MCF 10A (cell line): ENCODE measurements at regions of chr10 and their contacts with region 1.

Region 1: DNA sequence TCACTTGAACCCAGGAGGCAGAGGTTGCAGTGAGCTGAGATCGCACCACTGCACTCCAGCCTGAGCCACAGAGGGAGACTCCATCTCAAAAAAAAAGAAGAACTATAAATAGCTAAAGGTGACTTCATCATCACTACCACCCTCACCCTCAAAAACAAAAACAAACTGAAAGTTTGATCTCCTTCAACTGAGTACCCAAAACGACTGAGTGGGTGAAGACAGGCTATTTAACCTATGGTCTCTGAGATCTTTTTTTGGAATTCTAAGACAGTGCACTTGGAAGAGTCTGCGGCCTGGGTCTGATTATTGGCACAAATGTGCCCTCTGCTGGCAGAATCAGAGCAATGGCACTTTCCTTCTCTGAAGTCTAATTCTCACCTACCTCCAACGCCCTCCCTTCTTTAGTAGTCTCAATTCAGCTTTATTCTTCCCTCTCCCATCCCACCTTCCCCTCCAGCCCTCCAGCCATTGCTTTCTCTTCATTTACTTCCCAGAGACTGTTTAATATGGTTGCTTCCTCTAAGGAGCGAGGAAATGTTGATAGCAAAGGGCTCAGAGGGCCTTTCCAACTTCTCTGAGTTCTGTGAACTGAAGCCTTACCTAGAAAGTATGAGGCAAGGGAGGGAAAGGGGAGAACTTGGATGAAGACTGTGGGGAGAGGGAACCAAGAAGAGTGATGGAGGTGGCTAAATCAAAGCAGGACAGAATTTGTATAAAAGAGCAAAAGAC is 2.9 kb upstream of the MYOZ1 start:
- DNase-seq: peak; percentile 75
- H3K4me3 Mint-ChIP-seq: no peak overlapping the region
- H3K27ac Mint-ChIP-seq: no peak overlapping the region
- H3K4me1 Mint-ChIP-seq: peaks cover 7% of the 10 kb centered on the region
- H3K27me3 Mint-ChIP-seq: no peaks in the 10 kb centered on the region
- CTCF ChIP-seq: peak; percentile 85

Region 2: DNA sequence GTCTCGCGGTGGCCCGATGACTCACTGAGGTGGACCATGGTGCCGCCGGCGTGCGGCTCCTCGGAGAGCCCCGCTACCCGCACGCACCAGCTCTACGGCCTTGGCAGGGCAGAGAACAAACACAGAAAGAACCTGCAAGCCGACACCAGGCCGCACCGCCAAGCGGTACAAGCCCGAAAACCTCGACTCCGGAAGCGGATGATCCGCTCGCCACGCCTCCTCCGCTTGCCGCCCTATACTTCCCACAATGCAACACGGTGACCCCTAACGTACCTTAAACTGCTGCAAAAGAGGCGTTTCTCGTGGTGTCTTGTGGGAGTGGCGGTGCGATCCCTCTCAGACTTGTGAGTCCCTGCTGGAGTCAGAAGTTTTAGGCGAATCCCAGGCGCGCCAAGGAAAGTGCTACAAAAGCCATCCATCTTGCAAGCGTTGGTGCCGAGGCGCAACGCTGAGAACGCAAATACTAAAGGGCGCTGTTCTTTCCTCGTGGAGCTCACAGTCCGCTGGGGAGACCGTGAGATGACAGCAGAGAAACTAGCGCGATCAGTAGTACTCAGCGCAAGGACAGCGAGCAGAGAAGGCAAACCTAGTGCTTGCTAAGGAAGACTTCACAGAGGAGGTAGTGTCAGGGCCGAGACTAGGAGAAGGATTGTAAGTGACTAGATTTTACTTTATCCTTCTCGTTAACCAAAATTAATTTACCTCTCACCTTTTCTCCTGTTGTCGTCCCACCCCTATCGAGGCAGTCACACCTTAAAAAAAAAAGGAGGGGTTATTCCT is 391.5 kb before region 1 on chr10 and contains the start of gene MRPS16:
- CTCF ChIA-PET with region 1: no interaction called
- POLR2A ChIA-PET with region 1: no interaction called
- intact Hi-C with region 1: no loop called
- DNase-seq: peak; percentile 98
- H3K4me3 Mint-ChIP-seq: peak within 1 kb of the TSS; percentile 90
- H3K27ac Mint-ChIP-seq: peak within 1 kb of the TSS; percentile 94
- H3K4me1 Mint-ChIP-seq: peaks cover 9% of the 10 kb centered on the region
- H3K27me3 Mint-ChIP-seq: no peaks in the 10 kb centered on the region
- CTCF ChIP-seq: no peak
- total RNA-seq, gene MRPS16: 203 and 247 TPM in 2 replicates

Region 3: GRCh38 chr10:73522263-73522662 is 121.9 kb before region 1 on chr10:
- CTCF ChIA-PET with region 1: interaction called, 31 read pairs
- POLR2A ChIA-PET with region 1: no interaction called
- intact Hi-C with region 1: no loop called
- DNase-seq: no peak
- H3K4me3 Mint-ChIP-seq: no peak overlapping the region
- H3K27ac Mint-ChIP-seq: no peak overlapping the region
- H3K4me1 Mint-ChIP-seq: no peaks in the 10 kb centered on the region
- H3K27me3 Mint-ChIP-seq: no peaks in the 10 kb centered on the region
- CTCF ChIP-seq: no peak

Region 4: DNA sequence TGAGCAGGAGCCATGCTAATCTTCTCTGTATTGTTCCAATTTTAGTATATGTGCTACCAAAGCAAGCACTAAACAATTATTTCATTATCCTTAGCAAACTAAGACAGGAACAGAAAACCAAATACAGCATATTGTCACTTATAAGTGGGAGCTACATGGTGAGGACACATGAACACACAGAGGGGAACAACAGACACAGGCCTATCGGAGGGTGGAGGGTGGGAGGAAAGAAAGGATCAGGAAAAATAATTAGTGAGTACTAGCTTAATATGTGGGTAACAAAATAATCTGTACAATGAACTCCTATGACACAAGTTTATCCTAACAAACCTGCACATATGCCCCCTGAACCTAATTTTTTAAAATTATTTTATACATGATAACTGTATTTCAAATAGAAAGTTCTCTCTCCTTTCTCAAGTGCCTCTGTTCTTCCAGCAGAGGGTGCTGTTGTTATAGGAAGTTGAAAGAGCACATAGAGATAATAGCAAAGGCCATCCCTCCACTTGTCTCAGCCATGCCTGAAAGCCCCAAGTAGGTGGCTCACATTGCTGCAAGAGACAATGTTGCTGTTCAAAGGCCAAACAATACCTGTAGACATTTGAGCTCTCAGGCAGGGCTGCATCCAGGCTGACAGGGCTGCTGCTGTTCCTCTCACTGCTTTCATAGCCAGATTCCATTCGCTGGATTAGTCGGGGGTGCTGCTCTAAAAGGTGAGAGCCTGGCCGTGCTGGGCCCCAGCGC is 114.9 kb before region 1 on chr10:
- CTCF ChIA-PET with region 1: interaction called, 222 read pairs
- POLR2A ChIA-PET with region 1: interaction called, 10 read pairs
- intact Hi-C with region 1: loop called (anchors 1 kb)
- DNase-seq: peak; percentile 80
- H3K4me3 Mint-ChIP-seq: no peak overlapping the region
- H3K27ac Mint-ChIP-seq: no peak overlapping the region
- H3K4me1 Mint-ChIP-seq: no peaks in the 10 kb centered on the region
- H3K27me3 Mint-ChIP-seq: no peaks in the 10 kb centered on the region
- CTCF ChIP-seq: peak; percentile 87

Region 5: GRCh38 chr10:73537288-73537687 is 106.9 kb before region 1 on chr10:
- CTCF ChIA-PET with region 1: interaction called, 222 read pairs
- POLR2A ChIA-PET with region 1: interaction called, 3 read pairs
- intact Hi-C with region 1: no loop called
- DNase-seq: no peak
- H3K4me3 Mint-ChIP-seq: no peak overlapping the region
- H3K27ac Mint-ChIP-seq: no peak overlapping the region
- H3K4me1 Mint-ChIP-seq: no peaks in the 10 kb centered on the region
- H3K27me3 Mint-ChIP-seq: no peaks in the 10 kb centered on the region
- CTCF ChIP-seq: no peak

Region 6: DNA sequence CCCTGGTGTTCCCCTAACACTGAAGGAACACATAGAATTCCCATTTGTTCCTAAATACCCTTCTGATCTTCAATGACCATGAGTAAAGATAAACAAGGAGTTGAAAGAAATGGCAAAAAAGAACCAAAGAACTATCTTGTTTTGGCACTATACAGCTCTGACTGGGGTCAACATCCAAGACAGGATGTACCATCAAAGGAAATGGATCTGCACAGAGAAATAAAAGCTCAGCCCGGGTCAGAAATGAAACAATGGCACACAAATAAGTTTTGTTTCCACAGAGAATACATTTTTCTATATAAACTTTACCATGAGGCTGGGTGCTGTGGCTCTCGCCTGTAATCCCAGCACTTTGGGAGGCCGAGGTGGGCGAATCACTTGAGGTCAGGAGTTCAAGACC is 35.1 kb before region 1 on chr10:
- CTCF ChIA-PET with region 1: interaction called, 10 read pairs
- POLR2A ChIA-PET with region 1: no interaction called
- intact Hi-C with region 1: no loop called
- DNase-seq: no peak
- H3K4me3 Mint-ChIP-seq: no peak overlapping the region
- H3K27ac Mint-ChIP-seq: no peak overlapping the region
- H3K4me1 Mint-ChIP-seq: no peaks in the 10 kb centered on the region
- H3K27me3 Mint-ChIP-seq: no peaks in the 10 kb centered on the region
- CTCF ChIP-seq: no peak